ENCODE measurements at regions of chr4 and their contacts with region 1.

Region 1: GRCh38 chr4:141686146-141686775 is 49.9 kb downstream of the IL15 start:
- DNase-seq: no peak

Region 2: DNA sequence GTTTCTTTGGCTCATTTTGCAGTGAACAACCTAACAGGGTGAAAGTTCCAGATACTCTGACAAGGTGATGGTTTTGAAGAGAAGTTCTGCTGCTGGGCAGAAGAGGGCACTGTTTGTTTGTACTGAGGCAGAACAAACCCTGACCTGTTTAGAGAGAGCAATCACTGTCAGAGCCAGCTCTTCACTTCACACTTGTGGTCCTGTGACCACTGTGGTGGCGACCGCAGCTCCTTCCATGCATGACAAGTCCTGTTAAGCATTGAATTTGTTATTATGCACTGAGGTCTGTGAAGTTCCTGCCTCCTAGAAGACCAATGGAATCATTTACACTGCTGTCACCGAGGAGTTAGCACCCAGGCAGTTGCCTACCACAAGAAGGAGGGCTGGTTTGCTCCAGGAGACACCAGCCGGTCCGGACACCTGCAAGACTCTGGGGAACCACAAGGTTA is 379.0 kb before region 1 on chr4:
- in situ Hi-C with region 1: loop called (anchors 25 kb)
- DNase-seq: peak; percentile 78

Region 3: GRCh38 chr4:141898346-141898745 is 212.1 kb after region 1 on chr4:
- in situ Hi-C with region 1: no loop called
- DNase-seq: peak; percentile 4

Measured in SK-MEL-5 (cell line).